Activated CD4-positive, alpha-beta T cell treated with anti-CD3 and anti-CD28 coated beads for 36 hours (primary cell): ENCODE measurements at regions of chr14 and their contacts with region 1.

Region 1: GRCh38 chr14:100645192-100645990 is 58.2 kb upstream of the BEGAIN start:
- DNase-seq: peak; percentile 95
- ATAC-seq: peak; percentile 86
- H3K4me3 Mint-ChIP-seq: no peak overlapping the region
- H3K27ac Mint-ChIP-seq: no peak overlapping the region
- H3K4me1 Mint-ChIP-seq: peaks cover 39% of the 10 kb centered on the region
- H3K27me3 Mint-ChIP-seq: no peaks in the 10 kb centered on the region

Region 2: DNA sequence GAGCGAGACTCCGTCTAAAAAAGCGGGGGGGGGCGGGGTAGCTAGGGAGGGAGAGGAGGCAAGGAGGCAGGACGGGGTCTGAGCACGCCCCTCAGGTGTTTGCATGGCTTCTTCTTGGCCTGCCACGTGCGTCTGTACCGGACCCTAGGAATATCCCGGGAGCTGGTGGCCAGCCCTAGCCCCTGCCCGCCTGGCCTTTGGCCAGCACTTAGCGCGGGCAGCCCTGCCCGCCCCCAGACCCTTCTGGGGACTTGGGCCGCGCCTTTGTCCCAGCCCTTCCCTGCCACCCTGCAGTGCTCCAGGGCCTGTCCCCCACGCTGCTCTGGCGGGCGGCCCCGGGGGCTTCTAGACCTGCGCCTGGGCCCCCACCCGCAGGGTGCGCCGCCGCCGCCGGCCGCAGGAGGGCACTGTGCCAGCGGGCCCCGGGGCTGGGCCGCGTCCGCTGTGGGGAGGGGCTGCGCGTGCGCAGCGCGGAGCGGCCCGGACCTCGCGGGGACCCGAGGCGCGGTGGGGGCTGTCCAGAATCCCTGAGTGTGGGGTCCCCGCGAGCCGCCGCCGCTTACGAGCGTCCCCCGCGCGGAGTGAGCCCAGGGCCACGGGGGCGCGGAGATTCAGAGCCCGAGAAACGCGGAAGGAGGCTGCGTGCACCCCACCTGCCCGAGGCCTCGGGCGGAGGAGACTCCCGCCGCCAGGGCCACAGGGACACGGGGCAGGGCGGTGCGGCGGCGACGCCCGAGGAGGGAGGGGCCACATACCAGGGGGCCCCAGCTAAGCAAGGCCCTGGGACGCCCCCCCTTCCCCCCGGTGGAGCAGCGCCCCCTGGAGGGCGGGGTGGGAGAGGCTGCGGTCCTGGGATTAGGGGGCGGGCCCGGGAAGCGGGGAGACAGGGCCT is 360.1 kb before region 1 on chr14:
- CTCF ChIA-PET with region 1: no interaction called
- POLR2A ChIA-PET with region 1: no interaction called
- intact Hi-C with region 1: loop called in 1 of 2 experiments (anchors 10 kb)
- DNase-seq: peak; percentile 88
- ATAC-seq: peak; percentile 89
- H3K4me3 Mint-ChIP-seq: peak overlapping the region; percentile 68
- H3K27ac Mint-ChIP-seq: no peak overlapping the region
- H3K4me1 Mint-ChIP-seq: peaks cover 7% of the 10 kb centered on the region
- H3K27me3 Mint-ChIP-seq: no peaks in the 10 kb centered on the region

Region 3: DNA sequence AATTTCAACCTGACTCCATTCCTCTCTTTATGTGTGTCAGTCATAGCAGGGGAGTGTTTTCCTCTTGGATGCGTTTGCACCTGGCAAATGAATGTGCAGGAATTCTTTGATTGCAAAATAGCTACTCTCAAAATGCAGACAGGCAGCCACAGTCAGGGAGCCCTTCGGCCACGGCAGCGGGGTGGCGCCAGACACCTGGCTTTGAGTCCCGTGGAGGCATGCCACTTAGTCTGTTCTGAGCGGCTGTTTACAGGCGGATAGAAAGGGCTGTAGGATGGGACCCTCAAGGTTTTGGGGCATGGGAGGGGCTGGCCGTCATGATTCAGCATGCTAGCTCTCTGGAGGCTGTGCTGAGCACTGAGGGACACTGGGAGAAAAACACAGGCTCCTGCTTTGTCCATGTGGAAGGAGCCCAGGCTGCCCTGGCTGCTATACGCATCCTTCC is 205.2 kb before region 1 on chr14:
- CTCF ChIA-PET with region 1: interaction called, 16 read pairs
- POLR2A ChIA-PET with region 1: no interaction called
- intact Hi-C with region 1: loop called (anchors 1 to 5 kb)
- DNase-seq: peak; percentile 68
- ATAC-seq: no peak
- H3K4me3 Mint-ChIP-seq: no peak overlapping the region
- H3K27ac Mint-ChIP-seq: no peak overlapping the region
- H3K4me1 Mint-ChIP-seq: peaks cover 36% of the 10 kb centered on the region
- H3K27me3 Mint-ChIP-seq: no peaks in the 10 kb centered on the region

Region 4: GRCh38 chr14:100533656-100534485 is 111.5 kb before region 1 on chr14:
- CTCF ChIA-PET with region 1: interaction called, 14 read pairs
- POLR2A ChIA-PET with region 1: no interaction called
- intact Hi-C with region 1: no loop called
- DNase-seq: peak; percentile 49
- ATAC-seq: peak; percentile 53
- H3K4me3 Mint-ChIP-seq: no peak overlapping the region
- H3K27ac Mint-ChIP-seq: no peak overlapping the region
- H3K4me1 Mint-ChIP-seq: peaks cover 4% of the 10 kb centered on the region
- H3K27me3 Mint-ChIP-seq: no peaks in the 10 kb centered on the region

Region 5: GRCh38 chr14:100617410-100618317 is 27.7 kb before region 1 on chr14:
- CTCF ChIA-PET with region 1: interaction called, 16 read pairs
- POLR2A ChIA-PET with region 1: no interaction called
- intact Hi-C with region 1: no loop called
- DNase-seq: no peak
- ATAC-seq: no peak
- H3K4me3 Mint-ChIP-seq: no peak overlapping the region
- H3K27ac Mint-ChIP-seq: peak overlapping the region; percentile 28
- H3K4me1 Mint-ChIP-seq: peaks cover 19% of the 10 kb centered on the region
- H3K27me3 Mint-ChIP-seq: no peaks in the 10 kb centered on the region

Region 6: DNA sequence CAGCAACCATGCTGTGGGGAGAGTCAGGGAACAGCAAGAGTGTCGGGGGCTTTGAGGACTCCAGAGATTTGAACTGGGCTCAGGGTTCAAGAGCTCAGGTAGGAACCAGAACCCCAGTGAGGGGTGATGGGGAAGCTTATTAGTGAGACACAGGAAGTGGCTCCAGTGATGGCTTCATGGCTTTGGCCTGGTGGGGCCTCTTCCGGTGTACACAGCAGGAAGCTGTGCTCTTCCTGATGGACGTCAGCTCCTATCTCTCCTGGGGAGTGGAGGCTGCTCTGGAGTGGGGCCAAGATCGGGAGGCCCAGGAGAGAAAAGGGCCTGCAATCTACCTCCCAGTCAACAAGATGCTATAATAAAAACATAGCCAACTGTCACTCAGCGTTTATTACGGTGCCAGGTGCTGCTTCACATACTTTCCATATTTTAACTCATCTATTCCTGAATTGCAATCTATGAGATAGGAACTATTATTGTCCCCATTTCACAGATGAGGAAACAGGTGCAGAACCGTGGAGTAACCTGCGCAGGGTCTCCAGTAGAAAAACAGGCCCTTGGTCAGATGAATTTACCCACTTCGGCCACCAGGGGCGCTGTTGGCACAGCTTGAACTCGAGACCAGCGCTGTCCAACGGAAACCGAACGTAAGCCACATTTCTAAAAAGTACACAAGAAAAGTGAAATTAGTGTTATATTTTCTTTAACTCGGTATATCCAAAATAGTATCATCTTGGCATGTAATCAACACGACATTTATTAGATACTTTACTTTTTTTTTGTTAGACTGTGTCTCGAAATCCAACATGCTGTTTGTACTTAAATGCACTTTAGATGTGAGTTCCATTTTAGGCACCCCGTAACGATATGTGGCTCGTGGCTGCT is 17.7 kb after region 1 on chr14:
- CTCF ChIA-PET with region 1: interaction called, 22 read pairs
- POLR2A ChIA-PET with region 1: no interaction called
- intact Hi-C with region 1: no loop called
- DNase-seq: peak; percentile 81
- ATAC-seq: peak; percentile 80
- H3K4me3 Mint-ChIP-seq: no peak overlapping the region
- H3K27ac Mint-ChIP-seq: no peak overlapping the region
- H3K4me1 Mint-ChIP-seq: no peaks in the 10 kb centered on the region
- H3K27me3 Mint-ChIP-seq: no peaks in the 10 kb centered on the region